Body of pancreas (tissue), 4 donors: ENCODE measurements at regions of chr14 and their contacts with region 1.

Region 1: GRCh38 chr14:28756884-28757570 is 9.6 kb upstream of the FOXG1 start:
- DNase-seq: peak in 3 of 4 donors; percentile 23 to 44 (median 26)
- ATAC-seq: peak; percentile 52
- H3K4me3 ChIP-seq: no peak overlapping the region
- H3K27ac ChIP-seq: no peak overlapping the region
- H3K4me1 ChIP-seq: peaks cover 14% of the 10 kb centered on the region
- H3K27me3 ChIP-seq: peaks cover 0 to 55% of the 10 kb centered on the region in 2 donors
- CTCF ChIP-seq: peak in 6 of 7 experiments; percentile 22 to 56 (median 49)
- POLR2A ChIP-seq: no peak

Region 2: GRCh38 chr14:28857315-28857714 is 100.3 kb after region 1 on chr14:
- intact Hi-C with region 1: no loop called
- DNase-seq: no peak
- ATAC-seq: no peak
- H3K4me3 ChIP-seq: no peak overlapping the region
- H3K27ac ChIP-seq: no peak overlapping the region
- H3K4me1 ChIP-seq: no peaks in the 10 kb centered on the region
- H3K27me3 ChIP-seq: no peaks in the 10 kb centered on the region
- CTCF ChIP-seq: no peak
- POLR2A ChIP-seq: no peak

Region 3: GRCh38 chr14:29536886-29537511 is 780.0 kb after region 1 on chr14:
- intact Hi-C with region 1: loop called (anchors 5 kb)
- DNase-seq: no peak
- ATAC-seq: no peak
- H3K4me3 ChIP-seq: no peak overlapping the region
- H3K27ac ChIP-seq: no peak overlapping the region
- H3K4me1 ChIP-seq: no peaks in the 10 kb centered on the region
- H3K27me3 ChIP-seq: no peaks in the 10 kb centered on the region
- CTCF ChIP-seq: peak in 6 of 7 experiments; percentile 30 to 44 (median 35)
- POLR2A ChIP-seq: no peak